ENCODE measurements at regions of chr1 and their contacts with region 1.

Region 1: DNA sequence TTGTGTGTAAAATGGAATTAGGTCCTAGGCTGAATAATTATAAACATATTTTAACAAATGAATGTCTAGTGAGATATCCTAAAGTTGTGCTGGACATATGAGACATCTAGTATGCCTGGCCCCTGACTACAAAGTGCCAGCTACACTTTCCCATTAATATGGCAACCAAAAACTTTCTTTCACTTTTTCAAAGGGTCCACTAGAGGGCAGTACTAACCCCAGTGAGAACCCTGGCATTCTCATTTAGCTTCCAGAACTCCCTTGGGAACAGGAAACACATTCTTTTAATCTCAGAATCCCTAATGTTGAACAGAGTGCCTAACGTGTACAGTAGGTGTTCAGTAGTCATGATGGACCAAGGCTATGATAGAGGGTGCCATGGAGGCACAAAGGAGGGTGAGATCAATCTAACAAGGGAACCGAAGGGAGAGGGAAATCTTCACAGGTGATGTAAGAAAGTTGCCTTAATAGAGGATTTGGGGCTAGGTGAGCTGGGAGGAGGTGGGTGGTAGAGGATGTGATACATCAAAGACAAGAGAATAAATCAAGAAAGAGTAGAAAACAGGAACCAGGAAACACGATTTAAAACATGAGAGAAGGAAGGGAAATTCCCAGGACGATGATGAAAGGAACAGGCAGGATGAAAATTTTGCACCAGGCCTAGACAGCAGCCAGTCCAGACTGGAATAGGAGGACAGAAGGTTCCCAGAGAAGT is 41.6 kb downstream of the NSL1 start:
- DNase-seq: peak; percentile 90
- H3K4me3 Mint-ChIP-seq: peak overlapping the region; percentile 7
- H3K27ac Mint-ChIP-seq: peak overlapping the region; percentile 46
- H3K4me1 Mint-ChIP-seq: peaks cover 19% of the 10 kb centered on the region
- H3K27me3 Mint-ChIP-seq: no peaks in the 10 kb centered on the region
- CTCF ChIP-seq: peak; percentile 96

Region 2: DNA sequence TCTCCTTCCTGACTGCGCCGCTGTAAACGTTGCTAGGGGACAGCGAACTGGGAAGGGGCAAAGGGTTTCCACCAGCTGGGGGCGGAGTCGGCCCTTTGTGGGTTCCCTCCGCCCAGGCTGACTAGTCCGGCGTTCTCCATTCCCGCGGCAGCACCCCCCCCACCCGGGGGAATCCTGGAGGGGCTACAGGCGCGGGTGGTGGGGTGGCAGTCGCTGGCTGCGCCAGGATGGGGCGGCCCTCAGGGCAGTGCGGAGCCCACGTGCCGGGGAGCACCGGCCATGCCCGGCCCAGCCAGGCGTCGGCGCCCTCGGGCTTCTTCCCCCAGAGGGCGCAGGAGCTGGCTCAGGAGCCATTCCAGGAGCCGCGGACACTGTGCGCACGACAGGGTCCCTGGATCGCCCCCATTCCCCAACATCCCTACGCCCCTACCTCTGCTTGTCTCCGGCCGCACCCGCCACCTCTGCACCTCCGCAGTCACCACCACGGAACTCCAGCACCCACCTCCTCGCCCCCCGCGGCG is 50.8 kb before region 1 on chr1:
- CTCF ChIA-PET with region 1: interaction called, 6 read pairs
- POLR2A ChIA-PET with region 1: interaction called, 3 read pairs
- intact Hi-C with region 1: loop called (anchors 1 kb)
- DNase-seq: peak; percentile 59
- H3K4me3 Mint-ChIP-seq: peak overlapping the region; percentile 71
- H3K27ac Mint-ChIP-seq: no peak overlapping the region
- H3K4me1 Mint-ChIP-seq: peaks cover 12% of the 10 kb centered on the region
- H3K27me3 Mint-ChIP-seq: peaks cover 62% of the 10 kb centered on the region
- CTCF ChIP-seq: peak; percentile 91

Region 3: DNA sequence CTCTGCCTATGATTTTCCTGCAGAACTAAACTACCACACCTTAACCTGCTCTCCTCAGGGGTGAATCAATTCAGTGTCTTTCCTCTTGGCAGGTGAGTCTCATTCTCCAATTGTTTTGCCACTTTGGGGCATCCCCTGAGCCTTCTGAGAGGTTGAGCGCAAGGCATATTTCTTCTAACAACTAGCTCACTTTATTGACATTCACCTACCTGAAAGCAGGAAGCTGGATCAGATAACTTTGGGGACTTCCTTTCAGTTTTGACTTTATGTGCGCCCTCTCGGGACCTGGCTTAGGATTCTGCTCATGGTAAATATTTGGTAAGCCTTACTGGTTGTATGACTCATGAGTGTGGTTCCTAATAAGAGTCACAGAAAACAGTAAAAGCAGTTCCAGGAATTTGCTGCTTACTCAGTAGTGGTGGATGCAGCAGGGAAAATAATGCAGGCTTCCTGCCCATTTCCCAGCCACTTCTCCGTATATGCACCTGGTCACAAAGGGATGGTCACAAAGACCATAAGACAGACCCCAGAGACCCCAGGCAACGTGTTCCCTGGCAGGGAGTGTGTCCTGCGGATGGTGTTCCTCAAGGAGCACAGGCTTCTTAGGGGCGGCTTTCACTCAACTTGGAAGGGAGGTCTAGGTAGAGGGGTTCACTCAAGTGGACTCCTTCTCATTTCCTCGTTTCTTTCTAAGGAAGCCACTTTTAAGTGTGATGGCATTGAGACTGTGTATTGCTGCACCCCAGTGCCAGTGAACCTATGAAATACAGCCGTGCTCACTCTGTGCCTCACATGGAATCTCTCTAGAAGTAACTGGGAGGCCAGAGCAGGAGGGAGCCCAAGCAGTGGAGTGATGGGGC is 28.4 kb before region 1 on chr1:
- CTCF ChIA-PET with region 1: interaction called, 31 read pairs
- POLR2A ChIA-PET with region 1: interaction called, 4 read pairs
- intact Hi-C with region 1: loop called (anchors 2 kb)
- DNase-seq: peak; percentile 91
- H3K4me3 Mint-ChIP-seq: peak overlapping the region; percentile 51
- H3K27ac Mint-ChIP-seq: peak overlapping the region; percentile 21
- H3K4me1 Mint-ChIP-seq: peaks cover 18% of the 10 kb centered on the region
- H3K27me3 Mint-ChIP-seq: peaks cover 24% of the 10 kb centered on the region
- CTCF ChIP-seq: no peak

Region 4: GRCh38 chr1:212727386-212728181 is 22.4 kb before region 1 on chr1:
- CTCF ChIA-PET with region 1: interaction called, 31 read pairs
- POLR2A ChIA-PET with region 1: interaction called, 3 read pairs
- intact Hi-C with region 1: no loop called
- DNase-seq: peak; percentile 89
- H3K4me3 Mint-ChIP-seq: no peak overlapping the region
- H3K27ac Mint-ChIP-seq: peak overlapping the region; percentile 91
- H3K4me1 Mint-ChIP-seq: peaks cover 21% of the 10 kb centered on the region
- H3K27me3 Mint-ChIP-seq: no peaks in the 10 kb centered on the region
- CTCF ChIP-seq: no peak

Region 5: DNA sequence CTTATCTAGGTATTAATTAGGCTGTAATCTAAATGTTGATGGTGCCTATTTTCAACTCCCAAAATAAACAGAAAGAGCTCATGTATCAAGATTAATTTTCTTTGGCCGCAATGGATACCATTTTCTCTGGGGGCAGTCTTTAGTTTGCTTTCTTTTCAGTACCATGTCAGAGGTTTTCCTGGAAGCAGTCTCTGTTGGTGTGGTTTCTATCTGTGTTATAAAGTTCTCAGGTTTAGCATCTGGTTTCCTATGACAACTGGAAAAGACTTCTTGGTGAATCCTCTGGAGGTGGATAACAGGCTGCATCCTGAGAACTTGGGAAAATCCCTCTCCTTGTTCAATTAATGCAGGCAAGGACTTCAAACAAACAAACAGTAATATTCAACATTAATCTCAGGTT is 11.6 kb before region 1 on chr1:
- CTCF ChIA-PET with region 1: interaction called, 156 read pairs
- POLR2A ChIA-PET with region 1: interaction called, 6 read pairs
- intact Hi-C with region 1: no loop called
- DNase-seq: no peak
- H3K4me3 Mint-ChIP-seq: no peak overlapping the region
- H3K27ac Mint-ChIP-seq: no peak overlapping the region
- H3K4me1 Mint-ChIP-seq: no peaks in the 10 kb centered on the region
- H3K27me3 Mint-ChIP-seq: no peaks in the 10 kb centered on the region
- CTCF ChIP-seq: no peak

Region 6: GRCh38 chr1:212760126-212760823 is 10.3 kb after region 1 on chr1:
- CTCF ChIA-PET with region 1: interaction called, 156 read pairs
- POLR2A ChIA-PET with region 1: interaction called, 4 read pairs
- intact Hi-C with region 1: no loop called
- DNase-seq: peak; percentile 57
- H3K4me3 Mint-ChIP-seq: no peak overlapping the region
- H3K27ac Mint-ChIP-seq: no peak overlapping the region
- H3K4me1 Mint-ChIP-seq: no peaks in the 10 kb centered on the region
- H3K27me3 Mint-ChIP-seq: no peaks in the 10 kb centered on the region
- CTCF ChIP-seq: peak; percentile 82

Region 7: DNA sequence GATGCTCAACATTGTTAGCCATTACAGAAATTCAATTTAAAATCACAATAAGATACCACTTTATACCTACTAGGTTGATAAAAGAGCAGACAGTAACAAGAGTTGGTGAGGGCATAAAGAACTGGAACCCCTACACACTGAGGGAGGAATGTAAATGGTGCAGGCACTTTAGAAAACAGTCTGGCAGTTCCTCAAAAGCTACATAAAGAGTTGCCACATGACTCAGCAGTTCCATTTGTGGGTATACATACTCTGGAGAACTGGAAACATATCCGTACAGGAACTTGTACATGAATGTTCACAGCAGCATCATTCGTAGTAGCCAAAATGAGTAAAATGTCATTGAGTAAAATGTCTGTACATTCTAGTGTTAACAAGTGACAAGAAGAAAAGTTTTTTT is 24.6 kb after region 1 on chr1:
- CTCF ChIA-PET with region 1: interaction called, 26 read pairs
- POLR2A ChIA-PET with region 1: interaction called, 7 read pairs
- intact Hi-C with region 1: no loop called
- DNase-seq: peak; percentile 57
- H3K4me3 Mint-ChIP-seq: no peak overlapping the region
- H3K27ac Mint-ChIP-seq: no peak overlapping the region
- H3K4me1 Mint-ChIP-seq: peaks cover 9% of the 10 kb centered on the region
- H3K27me3 Mint-ChIP-seq: no peaks in the 10 kb centered on the region
- CTCF ChIP-seq: no peak

Region 8: GRCh38 chr1:213186168-213186567 is 436.2 kb after region 1 on chr1:
- CTCF ChIA-PET with region 1: no interaction called
- POLR2A ChIA-PET with region 1: no interaction called
- intact Hi-C with region 1: no loop called
- DNase-seq: no peak
- H3K4me3 Mint-ChIP-seq: no peak overlapping the region
- H3K27ac Mint-ChIP-seq: peak overlapping the region; percentile 18
- H3K4me1 Mint-ChIP-seq: no peaks in the 10 kb centered on the region
- H3K27me3 Mint-ChIP-seq: no peaks in the 10 kb centered on the region
- CTCF ChIP-seq: no peak